PC-9 (cell line): ENCODE measurements at regions of chr14 and their contacts with region 1.

Region 1: GRCh38 chr14:21071225-21072030 is 1.3 kb downstream of the ARHGEF40 start:
- DNase-seq: peak in 1 of 2 experiments; percentile 47
- H3K4me3 ChIP-seq: peak overlapping the region; percentile 64
- H3K27ac ChIP-seq: no peak overlapping the region
- H3K4me1 ChIP-seq: no peaks in the 10 kb centered on the region
- H3K27me3 ChIP-seq: no peaks in the 10 kb centered on the region; the same call in none of the 2 replicates
- CTCF ChIP-seq: no peak

Region 2: DNA sequence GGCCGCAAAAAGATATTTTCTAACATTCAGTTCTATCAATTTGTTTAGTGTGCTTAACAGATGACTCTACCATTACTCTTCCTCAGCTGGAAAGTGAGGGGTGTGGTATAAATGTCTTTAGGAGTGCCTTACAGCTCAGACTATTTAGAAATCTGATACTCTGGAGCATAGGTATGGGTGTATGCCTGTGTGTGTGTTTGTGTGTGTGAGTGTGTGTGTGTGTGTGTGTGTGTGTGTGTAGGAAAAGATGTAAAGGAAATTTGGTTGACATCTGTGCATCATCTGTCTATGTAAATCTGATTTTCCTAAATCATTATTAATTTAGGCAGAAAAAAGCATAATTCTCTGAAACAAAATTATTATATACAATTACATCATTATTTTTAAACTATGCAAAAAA is 164.2 kb before region 1 on chr14:
- CTCF ChIA-PET with region 1: no interaction called
- POLR2A ChIA-PET with region 1: interaction called, 16 read pairs
- intact Hi-C with region 1: no loop called
- DNase-seq: no peak
- H3K4me3 ChIP-seq: no peak overlapping the region
- H3K27ac ChIP-seq: no peak overlapping the region
- H3K4me1 ChIP-seq: no peaks in the 10 kb centered on the region
- H3K27me3 ChIP-seq: no peaks in the 10 kb centered on the region
- CTCF ChIP-seq: no peak

Region 3: DNA sequence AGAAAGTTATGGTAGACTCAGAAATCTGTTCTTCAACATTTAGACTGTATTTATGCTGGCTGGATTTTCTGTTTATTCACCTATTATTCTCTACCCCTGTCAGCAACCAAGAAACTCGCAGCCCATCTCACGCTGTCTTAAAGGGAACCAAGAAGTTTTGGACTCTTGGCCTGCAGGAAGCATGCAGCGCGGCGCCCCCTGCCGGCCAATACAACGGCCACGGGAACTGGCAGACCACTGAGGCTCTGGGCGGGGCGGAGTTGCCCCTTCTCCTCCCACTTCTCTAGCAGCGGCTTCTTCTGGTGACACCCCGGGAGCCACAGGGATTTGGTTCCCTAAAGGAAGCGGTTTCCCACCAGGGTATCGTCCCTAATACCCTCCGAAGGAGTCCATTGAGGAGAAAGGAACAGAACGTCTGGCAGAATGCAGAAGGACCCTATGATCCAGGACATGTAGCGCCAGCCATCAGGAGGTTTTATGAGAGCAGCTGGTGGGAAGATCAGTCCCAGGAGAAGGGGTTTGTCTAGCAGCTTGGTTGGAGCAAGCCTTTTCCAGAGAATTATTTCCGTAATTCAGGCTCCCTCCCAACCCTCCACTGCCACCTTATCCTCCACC is 137.2 kb before region 1 on chr14:
- CTCF ChIA-PET with region 1: no interaction called
- POLR2A ChIA-PET with region 1: no interaction called
- intact Hi-C with region 1: no loop called
- DNase-seq: no peak
- H3K4me3 ChIP-seq: no peak overlapping the region
- H3K27ac ChIP-seq: no peak overlapping the region
- H3K4me1 ChIP-seq: no peaks in the 10 kb centered on the region
- H3K27me3 ChIP-seq: peaks cover 7% of the 10 kb centered on the region; the same call in 1 of the 2 replicates
- CTCF ChIP-seq: peak; percentile 53

Region 4: GRCh38 chr14:21103710-21104447 is 32.5 kb after region 1 on chr14:
- CTCF ChIA-PET with region 1: interaction called, 19 read pairs
- POLR2A ChIA-PET with region 1: interaction called, 5 read pairs
- intact Hi-C with region 1: loop called (anchors 1 kb)
- DNase-seq: peak; percentile 81 to 88
- H3K4me3 ChIP-seq: peak overlapping the region; percentile 70
- H3K27ac ChIP-seq: peak overlapping the region; percentile 89
- H3K4me1 ChIP-seq: peaks cover 54% of the 10 kb centered on the region
- H3K27me3 ChIP-seq: no peaks in the 10 kb centered on the region
- CTCF ChIP-seq: no peak

Region 5: GRCh38 chr14:21123429-21123828 is 52.0 kb after region 1 on chr14:
- CTCF ChIA-PET with region 1: no interaction called
- POLR2A ChIA-PET with region 1: interaction called, 16 read pairs
- intact Hi-C with region 1: no loop called
- DNase-seq: no peak
- H3K4me3 ChIP-seq: no peak overlapping the region
- H3K27ac ChIP-seq: no peak overlapping the region
- H3K4me1 ChIP-seq: no peaks in the 10 kb centered on the region
- H3K27me3 ChIP-seq: 0 out of 2 replicates have a peak, but pooled peaks cover 5% of the 10 kb centered on the region
- CTCF ChIP-seq: no peak

Region 6: DNA sequence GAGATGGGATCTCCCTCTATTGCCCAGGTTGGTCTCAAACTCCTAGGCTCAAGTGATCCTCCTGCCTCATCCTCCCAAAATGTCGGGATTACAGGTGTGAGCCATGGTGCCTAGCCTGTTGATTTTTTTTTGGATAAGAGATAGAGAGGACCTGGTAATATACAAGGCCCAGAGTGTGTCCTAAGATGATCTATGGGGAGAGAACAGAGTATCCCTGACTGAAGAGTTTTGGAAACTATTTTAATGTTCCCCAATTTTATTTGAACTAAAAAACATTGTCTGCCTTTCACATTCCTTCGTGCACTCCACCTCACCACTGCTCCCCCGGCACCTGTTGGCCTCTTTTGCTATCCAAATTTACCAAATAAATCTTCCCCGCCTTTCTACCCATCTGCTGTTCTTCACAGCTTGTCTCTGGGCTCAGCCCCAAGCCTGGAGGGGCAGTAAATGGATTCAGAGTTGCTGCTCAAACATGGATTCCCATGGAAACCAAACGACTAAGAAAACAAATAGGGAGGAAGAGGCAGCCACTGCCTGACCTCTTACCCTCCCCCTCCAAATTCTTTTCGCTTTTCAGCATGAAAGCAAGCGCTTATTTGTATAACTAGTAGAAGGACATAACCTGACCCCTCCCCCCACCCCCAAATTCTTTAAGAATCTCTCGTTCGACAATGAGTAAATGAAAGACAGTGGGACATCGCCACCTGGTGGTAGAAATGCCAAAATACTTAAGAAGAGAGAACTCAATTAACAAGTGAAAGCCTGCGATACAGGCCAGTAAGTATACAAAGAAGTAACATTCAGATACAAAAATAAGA is 485.9 kb after region 1 on chr14:
- CTCF ChIA-PET with region 1: no interaction called
- POLR2A ChIA-PET with region 1: no interaction called
- intact Hi-C with region 1: loop called (anchors 5 kb)
- DNase-seq: peak; percentile 57 to 77
- H3K4me3 ChIP-seq: peak overlapping the region; percentile 6; the same call in 1 of the 2 replicates
- H3K27ac ChIP-seq: no peak overlapping the region
- H3K4me1 ChIP-seq: no peaks in the 10 kb centered on the region; the same call in 1 of the 2 replicates
- H3K27me3 ChIP-seq: no peaks in the 10 kb centered on the region
- CTCF ChIP-seq: peak; percentile 79